Panc1 (cell line): ENCODE measurements at regions of chr3 and their contacts with region 1.

Region 1: GRCh38 chr3:75171630-75172230 is 492.4 kb upstream of the FRG2C start:
- DNase-seq: no peak
- ATAC-seq: no peak
- H3K4me3 ChIP-seq: no peak overlapping the region
- H3K27ac ChIP-seq: no peak overlapping the region
- H3K4me1 ChIP-seq: no peaks in the 10 kb centered on the region
- H3K27me3 ChIP-seq: no peaks in the 10 kb centered on the region
- CTCF ChIP-seq: peak; percentile 45; the same call in 1 of the 2 replicates

Region 2: DNA sequence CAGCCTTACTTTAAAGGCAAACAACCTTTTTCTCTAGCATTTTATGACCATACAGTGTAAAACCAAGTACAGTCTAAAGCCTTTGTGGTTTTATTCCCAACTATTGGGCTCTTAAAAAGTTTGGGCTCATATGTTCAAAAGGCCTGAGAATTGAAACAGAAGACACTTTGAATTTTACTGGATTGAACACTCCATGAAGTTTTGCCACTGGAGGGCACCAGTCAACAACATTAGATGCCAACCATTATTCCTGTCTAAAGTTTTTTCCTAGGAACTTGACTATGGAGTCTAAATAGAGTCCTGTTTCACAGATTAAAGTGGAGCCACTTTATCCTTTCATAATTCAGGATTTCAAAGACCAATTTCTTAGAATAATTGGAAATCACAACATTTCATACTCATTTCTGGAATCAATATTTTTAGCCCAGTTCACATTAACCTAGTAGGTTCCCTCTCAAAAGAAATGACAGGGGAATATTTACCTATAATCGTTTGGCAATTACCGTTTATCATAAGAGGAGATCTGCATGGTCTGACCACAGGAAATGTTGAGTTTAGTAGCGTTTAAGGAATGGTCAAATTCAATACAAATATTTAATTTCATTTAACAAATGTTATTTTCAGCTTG is 1302.9 kb before region 1 on chr3:
- CTCF ChIA-PET with region 1: no interaction called
- POLR2A ChIA-PET with region 1: no interaction called
- in situ Hi-C with region 1: no loop called
- intact Hi-C with region 1: loop called (anchors 5 kb)
- DNase-seq: no peak
- ATAC-seq: peak; percentile 62; the same call in 1 of the 2 replicates
- H3K4me3 ChIP-seq: no peak overlapping the region
- H3K27ac ChIP-seq: no peak overlapping the region
- H3K4me1 ChIP-seq: no peaks in the 10 kb centered on the region
- H3K27me3 ChIP-seq: no peaks in the 10 kb centered on the region
- CTCF ChIP-seq: peak; percentile 59; the same call in 1 of the 2 replicates

Region 3: GRCh38 chr3:74711913-74712512 is 459.7 kb before region 1 on chr3:
- CTCF ChIA-PET with region 1: no interaction called
- POLR2A ChIA-PET with region 1: no interaction called
- in situ Hi-C with region 1: no loop called
- intact Hi-C with region 1: no loop called
- DNase-seq: no peak
- ATAC-seq: no peak
- H3K4me3 ChIP-seq: no peak overlapping the region
- H3K27ac ChIP-seq: no peak overlapping the region
- H3K4me1 ChIP-seq: no peaks in the 10 kb centered on the region
- H3K27me3 ChIP-seq: no peaks in the 10 kb centered on the region
- CTCF ChIP-seq: no peak

Region 4: DNA sequence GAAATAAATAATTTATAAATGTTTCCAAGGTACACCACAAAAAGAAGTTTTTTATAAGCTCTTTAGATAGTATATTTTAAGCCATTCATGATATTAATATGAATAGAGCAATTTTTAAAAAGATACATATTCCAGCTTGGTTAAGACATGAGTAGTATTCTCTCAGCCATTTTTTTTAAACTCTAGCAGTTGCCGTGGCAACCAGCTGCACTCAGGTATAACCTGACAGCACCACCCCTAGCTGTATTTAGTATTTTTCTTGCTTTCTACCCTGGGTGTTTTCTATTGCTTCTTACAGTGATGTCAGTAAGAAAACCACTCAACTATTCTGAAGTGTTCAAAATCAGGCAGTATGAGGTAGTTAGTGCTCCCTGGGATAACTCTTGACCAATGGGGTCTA is 61.0 kb before region 1 on chr3:
- CTCF ChIA-PET with region 1: no interaction called
- POLR2A ChIA-PET with region 1: no interaction called
- in situ Hi-C with region 1: no loop called
- intact Hi-C with region 1: no loop called
- DNase-seq: no peak
- ATAC-seq: no peak
- H3K4me3 ChIP-seq: no peak overlapping the region
- H3K27ac ChIP-seq: no peak overlapping the region
- H3K4me1 ChIP-seq: no peaks in the 10 kb centered on the region
- H3K27me3 ChIP-seq: no peaks in the 10 kb centered on the region
- CTCF ChIP-seq: no peak